ENCODE measurements at regions of chr17 and their contacts with region 1.

Region 1: GRCh38 chr17:1365445-1366039 is 34.5 kb downstream of the YWHAE start:
- DNase-seq: peak; percentile 74
- CTCF ChIP-seq: peak; percentile 67

Region 2: GRCh38 chr17:1379930-1380313 is 14.4 kb after region 1 on chr17:
- CTCF ChIA-PET with region 1: interaction called, 100 read pairs
- POLR2A ChIA-PET with region 1: no interaction called
- DNase-seq: peak; percentile 52
- CTCF ChIP-seq: no peak

Region 3: GRCh38 chr17:1413281-1413791 is 47.8 kb after region 1 on chr17:
- CTCF ChIA-PET with region 1: interaction called, 13 read pairs
- POLR2A ChIA-PET with region 1: no interaction called
- DNase-seq: no peak
- CTCF ChIP-seq: no peak

Region 4: GRCh38 chr17:1455291-1455796 is 89.8 kb after region 1 on chr17:
- CTCF ChIA-PET with region 1: interaction called, 12 read pairs
- POLR2A ChIA-PET with region 1: no interaction called
- DNase-seq: peak; percentile 52
- CTCF ChIP-seq: peak; percentile 41

Region 5: GRCh38 chr17:1506649-1507267 is 141.2 kb after region 1 on chr17:
- CTCF ChIA-PET with region 1: interaction called, 13 read pairs
- POLR2A ChIA-PET with region 1: no interaction called
- DNase-seq: no peak
- CTCF ChIP-seq: no peak

Region 6: DNA sequence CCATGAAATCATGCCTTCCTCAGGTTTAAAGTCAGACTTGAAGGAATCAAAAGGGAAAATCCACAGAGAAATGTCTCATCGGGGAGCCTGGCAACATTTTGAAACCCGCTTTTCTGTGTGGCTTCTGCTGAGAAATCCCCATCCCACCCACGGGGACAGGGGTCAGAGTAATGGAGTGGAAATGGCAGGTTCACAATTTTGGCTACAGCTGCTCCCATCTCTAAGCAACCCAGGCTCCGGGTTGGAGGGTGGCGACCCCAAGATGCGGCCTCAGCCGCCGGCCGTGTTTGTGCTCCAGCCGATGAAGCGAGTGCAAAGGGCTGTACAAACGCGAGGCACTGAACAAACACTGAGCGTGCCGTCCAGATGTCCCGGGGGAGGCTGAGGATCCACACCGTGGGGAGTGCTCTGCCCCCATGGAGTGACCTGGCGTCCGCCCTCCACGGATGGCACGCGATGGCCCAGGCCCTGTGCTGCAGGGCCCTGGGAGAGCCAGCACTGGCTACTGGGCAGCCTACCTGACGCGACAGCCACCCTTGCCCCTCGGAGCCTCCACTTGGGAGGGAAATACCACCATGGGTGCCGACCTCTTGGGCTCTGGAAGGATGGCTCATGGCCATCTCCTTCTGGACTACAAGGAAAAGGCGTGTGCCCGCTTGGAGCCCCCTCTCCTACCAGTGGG is 241.0 kb after region 1 on chr17:
- CTCF ChIA-PET with region 1: no interaction called
- POLR2A ChIA-PET with region 1: no interaction called
- DNase-seq: peak; percentile 30
- CTCF ChIP-seq: no peak

Region 7: DNA sequence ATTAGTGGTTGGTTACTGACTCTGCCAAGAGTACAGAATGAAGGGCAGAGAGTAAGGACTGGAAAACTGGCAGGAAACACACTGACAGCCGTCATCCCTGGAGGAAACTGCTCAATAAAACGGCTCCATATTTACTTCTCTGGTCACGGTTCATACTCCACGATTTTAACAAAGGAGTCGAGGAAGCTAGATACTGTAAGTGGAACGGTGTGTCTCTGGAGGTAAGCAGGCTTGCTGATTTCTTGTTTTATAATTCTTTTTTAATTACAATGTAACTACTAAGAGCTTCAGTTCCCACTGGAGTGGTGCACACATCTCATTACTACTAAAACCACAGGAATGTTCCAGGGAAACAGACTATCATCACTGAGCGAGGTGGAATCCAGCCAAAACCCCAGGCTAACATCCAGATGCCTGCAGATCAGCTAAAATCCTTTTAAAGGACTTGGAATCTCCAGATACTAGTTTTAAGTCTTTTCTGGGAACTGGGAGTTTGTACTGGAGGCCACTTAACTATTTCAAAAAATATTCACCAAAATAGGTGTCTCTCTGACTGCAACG is 414.1 kb after region 1 on chr17:
- CTCF ChIA-PET with region 1: no interaction called
- POLR2A ChIA-PET with region 1: no interaction called
- DNase-seq: no peak
- CTCF ChIP-seq: no peak

Measured in GM10248 (cell line).